IMR-90 (cell line): ENCODE measurements at regions of chr7 and their contacts with region 1.

Region 1: GRCh38 chr7:36765605-36766004 is 41.3 kb upstream of the AOAH start:
- DNase-seq: no peak
- ATAC-seq: no peak
- H3K4me3 ChIP-seq: no peak overlapping the region
- H3K27ac ChIP-seq: no peak overlapping the region
- H3K4me1 ChIP-seq: no peaks in the 10 kb centered on the region
- H3K27me3 ChIP-seq: no peaks in the 10 kb centered on the region
- CTCF ChIP-seq: no peak
- POLR2A ChIP-seq: no peak
- RAD21 ChIP-seq: no peak

Region 2: GRCh38 chr7:37174460-37174859 is 408.9 kb after region 1 on chr7:
- CTCF ChIA-PET with region 1: no interaction called
- POLR2A ChIA-PET with region 1: no interaction called
- dilution Hi-C with region 1: no loop called
- in situ Hi-C with region 1: no loop called
- intact Hi-C with region 1: no loop called
- DNase-seq: no peak
- ATAC-seq: no peak
- H3K4me3 ChIP-seq: no peak overlapping the region
- H3K27ac ChIP-seq: no peak overlapping the region
- H3K4me1 ChIP-seq: no peaks in the 10 kb centered on the region
- H3K27me3 ChIP-seq: no peaks in the 10 kb centered on the region
- CTCF ChIP-seq: no peak
- POLR2A ChIP-seq: no peak
- RAD21 ChIP-seq: no peak

Region 3: DNA sequence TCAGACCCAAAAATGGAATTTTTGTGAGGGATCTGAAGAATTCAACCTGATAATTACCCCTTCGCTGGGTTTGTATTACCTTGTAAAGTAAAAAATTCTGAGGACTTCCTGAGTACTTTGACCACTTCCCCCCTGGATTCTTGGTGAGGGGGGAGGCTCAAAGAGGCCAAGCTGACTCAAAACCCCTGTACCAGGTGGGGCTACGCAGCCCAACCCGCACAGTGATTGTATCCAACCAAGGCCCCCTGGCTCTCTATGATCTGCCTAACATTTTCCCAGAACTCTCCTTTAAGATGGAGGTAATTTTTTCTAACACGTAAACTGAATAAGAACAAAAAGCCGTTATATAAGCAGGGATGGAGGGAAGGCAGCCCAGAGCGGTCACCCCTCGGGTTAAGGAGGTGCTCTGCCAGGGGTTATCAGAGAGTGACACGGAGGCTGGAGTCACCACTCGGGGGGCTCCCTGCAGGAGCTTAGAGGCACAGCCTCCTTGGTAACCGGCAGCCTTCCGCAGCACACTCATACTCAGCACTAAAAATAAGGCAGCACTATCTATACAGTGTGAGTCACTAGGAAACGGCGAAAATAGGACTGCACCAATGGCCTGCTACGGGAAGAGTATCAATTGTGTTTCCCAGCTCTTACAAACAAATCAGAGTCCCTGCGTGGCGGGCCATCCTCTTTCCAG is 427.6 kb after region 1 on chr7:
- CTCF ChIA-PET with region 1: no interaction called
- POLR2A ChIA-PET with region 1: interaction called, 12 read pairs
- dilution Hi-C with region 1: no loop called
- in situ Hi-C with region 1: no loop called
- intact Hi-C with region 1: no loop called
- DNase-seq: no peak
- ATAC-seq: no peak
- H3K4me3 ChIP-seq: no peak overlapping the region
- H3K27ac ChIP-seq: no peak overlapping the region
- H3K4me1 ChIP-seq: no peaks in the 10 kb centered on the region
- H3K27me3 ChIP-seq: no peaks in the 10 kb centered on the region
- CTCF ChIP-seq: no peak
- POLR2A ChIP-seq: no peak
- RAD21 ChIP-seq: no peak